Heart right ventricle (tissue), 16 donors: ENCODE measurements at regions of chr1 and their contacts with region 1.

Region 1: GRCh38 chr1:202200112-202200566 is 6.5 kb downstream of the LGR6 start:
- DNase-seq: no peak
- ATAC-seq: peak in 3 of 8 donors; percentile 23 to 29 (median 23)
- H3K4me3 ChIP-seq: no peak overlapping the region
- H3K27ac ChIP-seq: peak overlapping the region; percentile 62 to 86 (median 78)
- H3K4me1 ChIP-seq: peaks cover 5 to 41% (median 22%) of the 10 kb centered on the region in 9 donors
- H3K27me3 ChIP-seq: peaks cover 0 to 13% (median 0%) of the 10 kb centered on the region in 7 donors
- CTCF ChIP-seq: peak in 2 of 9 donors; percentile 10 to 20

Region 2: DNA sequence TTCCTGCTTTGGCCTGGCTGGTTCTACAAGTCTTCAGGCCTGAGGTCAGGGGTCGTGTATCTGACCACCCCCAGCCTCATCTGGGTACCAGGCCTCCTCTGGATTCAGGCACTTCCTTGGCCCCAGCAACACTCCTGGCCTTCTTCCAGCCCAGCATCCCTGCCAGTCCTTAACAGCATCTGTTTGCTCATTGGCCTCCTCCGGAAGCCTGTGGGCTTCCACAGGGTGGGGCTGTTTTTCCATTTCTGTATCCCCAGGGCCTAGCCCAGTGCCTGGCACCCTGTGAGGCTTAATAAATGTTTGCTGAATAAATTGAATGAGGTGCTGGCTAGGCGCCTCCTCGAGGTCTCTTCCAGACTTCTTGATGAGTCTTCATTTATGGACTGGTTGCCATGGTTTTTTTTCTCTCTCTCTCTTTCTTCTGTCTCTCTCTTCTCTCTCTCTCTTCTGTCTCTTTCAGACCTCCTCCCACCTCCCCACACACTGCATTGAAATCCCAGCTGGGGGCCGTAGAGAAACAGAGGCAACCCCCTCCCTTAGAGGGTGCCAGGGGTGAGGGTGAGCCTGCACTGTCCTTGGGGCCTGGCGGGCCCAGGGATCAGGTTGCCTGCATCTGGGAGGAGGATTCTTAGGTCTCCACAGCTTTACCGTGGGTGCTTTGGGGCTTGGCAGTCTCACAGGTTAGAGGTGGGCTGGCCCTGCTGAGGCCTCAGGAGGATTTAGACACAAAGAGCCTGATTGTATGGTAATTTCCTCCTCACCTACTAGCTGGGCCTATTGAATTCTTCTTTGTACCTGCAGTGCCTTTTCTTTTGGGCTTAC is 98.7 kb before region 1 on chr1:
- intact Hi-C with region 1: no loop called
- DNase-seq: no peak
- ATAC-seq: no peak
- H3K4me3 ChIP-seq: no peak overlapping the region
- H3K27ac ChIP-seq: no peak overlapping the region
- H3K4me1 ChIP-seq: peaks cover 0 to 4% (median 0%) of the 10 kb centered on the region in 9 donors
- H3K27me3 ChIP-seq: no peaks in the 10 kb centered on the region
- CTCF ChIP-seq: no peak

Region 3: DNA sequence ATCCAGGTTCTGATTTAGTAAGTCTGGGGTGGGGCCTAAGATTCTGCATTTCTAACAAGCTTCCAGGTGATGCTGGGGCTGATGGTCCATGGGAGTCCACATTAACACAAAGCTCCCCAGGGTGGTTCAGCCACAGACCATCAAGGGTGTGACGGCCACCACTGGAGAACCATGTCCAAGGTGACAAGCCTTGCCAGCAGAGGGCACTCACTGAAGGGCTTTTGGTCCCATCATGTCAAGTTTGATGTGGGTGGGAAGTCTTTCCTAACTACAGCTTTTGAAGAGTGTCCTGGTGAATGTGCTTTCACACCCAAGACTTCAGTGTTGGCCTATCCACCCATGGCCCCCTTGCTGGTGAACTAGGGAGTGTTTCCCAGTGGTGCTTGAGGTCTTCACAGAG is 74.5 kb after region 1 on chr1:
- intact Hi-C with region 1: no loop called
- DNase-seq: peak in 1 of 2 donors; percentile 17
- ATAC-seq: peak in 2 of 8 donors; percentile 26 to 42
- H3K4me3 ChIP-seq: no peak overlapping the region
- H3K27ac ChIP-seq: no peak overlapping the region
- H3K4me1 ChIP-seq: no peaks in the 10 kb centered on the region
- H3K27me3 ChIP-seq: peaks cover 0 to 14% (median 4%) of the 10 kb centered on the region in 7 donors
- CTCF ChIP-seq: peak in 7 of 9 donors; percentile 32 to 56 (median 53)

Region 4: GRCh38 chr1:202286622-202287097 is 86.5 kb after region 1 on chr1:
- intact Hi-C with region 1: loop called in 1 of 10 experiments (anchors 5 kb)
- DNase-seq: peak; percentile 41 to 64
- ATAC-seq: peak; percentile 61 to 90 (median 87)
- H3K4me3 ChIP-seq: no peak overlapping the region
- H3K27ac ChIP-seq: peak overlapping the region in 9 of 10 donors; percentile 20 to 69 (median 52)
- H3K4me1 ChIP-seq: peaks cover 0 to 30% (median 16%) of the 10 kb centered on the region in 9 donors
- H3K27me3 ChIP-seq: peaks cover 0 to 11% (median 0%) of the 10 kb centered on the region in 7 donors
- CTCF ChIP-seq: peak in 1 of 9 donors; percentile 29